Caco-2 (cell line): ENCODE measurements at regions of chr15 and their contacts with region 1.

Region 1: GRCh38 chr15:98779463-98780071 is 131.2 kb downstream of the IGF1R start:
- DNase-seq: peak; percentile 75 to 84
- H3K4me3 ChIP-seq: no peak overlapping the region
- H3K4me3 Mint-ChIP-seq: no peak overlapping the region
- H3K27ac Mint-ChIP-seq: peak overlapping the region; percentile 58
- H3K4me1 ChIP-seq: no peaks in the 10 kb centered on the region; the same call in none of the 2 replicates
- H3K4me1 Mint-ChIP-seq: peaks cover 16% of the 10 kb centered on the region
- H3K27me3 ChIP-seq: no peaks in the 10 kb centered on the region
- H3K27me3 Mint-ChIP-seq: no peaks in the 10 kb centered on the region
- CTCF ChIP-seq: peak; percentile 81 to 87

Region 2: DNA sequence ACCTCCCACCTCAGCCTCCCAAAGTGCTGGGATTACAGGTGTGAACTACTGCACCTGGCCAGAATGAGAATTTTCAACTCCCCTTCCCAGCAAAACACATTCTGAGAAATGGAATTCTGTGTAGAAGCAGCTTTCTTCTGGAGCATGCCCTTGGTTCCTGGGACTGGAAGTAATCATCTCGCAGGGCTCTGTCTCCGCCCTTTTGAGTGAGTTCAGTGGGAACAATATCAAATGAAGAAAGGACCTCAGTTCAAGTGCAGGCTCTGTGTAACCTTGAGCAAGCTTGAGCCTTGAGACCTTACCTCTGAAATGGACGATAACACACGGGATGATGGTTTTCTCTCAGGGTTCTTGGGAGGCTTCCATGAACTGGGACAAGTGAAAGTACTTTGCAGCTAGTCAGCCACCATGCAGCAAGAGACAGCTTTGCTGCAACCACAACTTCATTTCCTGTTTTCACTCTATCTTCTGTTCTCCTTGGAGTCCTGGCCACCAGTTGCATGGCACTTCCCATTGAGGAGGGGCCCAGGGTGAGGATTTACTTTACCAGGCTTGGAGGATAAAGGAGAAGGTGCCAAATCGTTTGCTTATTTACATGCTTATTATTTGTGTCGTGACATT is 167.0 kb before region 1 on chr15:
- CTCF ChIA-PET with region 1: no interaction called
- POLR2A ChIA-PET with region 1: no interaction called
- intact Hi-C with region 1: no loop called
- DNase-seq: no peak
- H3K4me3 ChIP-seq: no peak overlapping the region
- H3K4me3 Mint-ChIP-seq: no peak overlapping the region
- H3K27ac Mint-ChIP-seq: no peak overlapping the region
- H3K4me1 ChIP-seq: peaks cover 10% of the 10 kb centered on the region
- H3K4me1 Mint-ChIP-seq: peaks cover 6% of the 10 kb centered on the region
- H3K27me3 ChIP-seq: no peaks in the 10 kb centered on the region
- H3K27me3 Mint-ChIP-seq: no peaks in the 10 kb centered on the region
- CTCF ChIP-seq: no peak

Region 3: GRCh38 chr15:98626153-98626552 is 153.4 kb before region 1 on chr15:
- CTCF ChIA-PET with region 1: no interaction called
- POLR2A ChIA-PET with region 1: no interaction called
- intact Hi-C with region 1: no loop called
- DNase-seq: no peak
- H3K4me3 ChIP-seq: no peak overlapping the region
- H3K4me3 Mint-ChIP-seq: no peak overlapping the region
- H3K27ac Mint-ChIP-seq: no peak overlapping the region
- H3K4me1 ChIP-seq: peaks cover 6% of the 10 kb centered on the region; the same call in 1 of the 2 replicates
- H3K4me1 Mint-ChIP-seq: no peaks in the 10 kb centered on the region
- H3K27me3 ChIP-seq: no peaks in the 10 kb centered on the region
- H3K27me3 Mint-ChIP-seq: peaks cover 29% of the 10 kb centered on the region
- CTCF ChIP-seq: no peak

Region 4: DNA sequence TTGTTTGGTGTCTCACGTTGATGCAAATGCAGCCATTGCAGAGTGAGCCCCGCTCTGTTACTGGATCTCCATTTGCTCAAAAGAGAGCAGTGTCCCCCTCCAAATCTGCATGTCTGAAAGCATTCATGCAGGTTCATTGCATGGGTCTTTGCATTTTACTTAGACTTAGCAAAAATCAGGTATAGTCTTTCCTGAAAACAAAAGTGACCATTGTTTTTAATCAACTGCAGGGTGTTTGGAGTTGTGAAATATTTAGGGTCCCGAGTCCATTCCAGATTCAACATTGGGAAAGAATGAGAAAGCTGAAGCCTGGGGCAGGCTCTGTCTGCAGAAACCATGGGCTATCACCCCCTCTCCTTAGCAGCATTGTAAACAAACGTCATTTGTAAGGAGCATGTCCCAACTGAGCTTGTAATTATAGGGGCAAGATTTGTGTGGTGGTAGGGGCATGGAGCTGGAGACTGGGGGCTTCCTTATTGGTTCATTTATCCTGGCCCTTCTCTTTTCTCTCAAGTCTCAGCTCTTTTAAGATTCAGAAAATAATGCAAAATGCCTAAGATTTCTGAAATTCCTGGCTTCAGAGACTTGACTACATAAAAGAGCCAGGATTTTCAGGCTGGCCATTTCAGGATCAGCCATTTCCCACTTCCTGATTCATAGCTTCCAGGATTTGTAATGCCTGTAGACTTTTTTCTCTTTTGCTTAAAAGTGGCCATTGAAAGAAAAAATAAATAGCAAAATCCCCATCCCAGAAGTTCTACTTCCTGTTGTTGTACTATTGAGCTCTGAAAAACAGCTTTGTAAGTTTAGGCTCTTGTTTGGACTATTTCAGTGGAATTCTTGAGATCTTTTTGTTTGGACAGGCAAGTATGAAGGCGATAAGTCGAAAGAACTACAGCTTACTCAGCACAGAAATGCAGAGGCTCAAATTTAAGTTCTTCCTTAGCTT is 108.2 kb before region 1 on chr15:
- CTCF ChIA-PET with region 1: no interaction called
- POLR2A ChIA-PET with region 1: no interaction called
- intact Hi-C with region 1: loop called (anchors 5 kb)
- DNase-seq: peak in 1 of 2 experiments; percentile 60
- H3K4me3 ChIP-seq: no peak overlapping the region
- H3K4me3 Mint-ChIP-seq: peak overlapping the region; percentile 56
- H3K27ac Mint-ChIP-seq: peak overlapping the region; percentile 82
- H3K4me1 ChIP-seq: peaks cover 68% of the 10 kb centered on the region
- H3K4me1 Mint-ChIP-seq: peaks cover 42% of the 10 kb centered on the region
- H3K27me3 ChIP-seq: no peaks in the 10 kb centered on the region
- H3K27me3 Mint-ChIP-seq: no peaks in the 10 kb centered on the region
- CTCF ChIP-seq: no peak

Region 5: DNA sequence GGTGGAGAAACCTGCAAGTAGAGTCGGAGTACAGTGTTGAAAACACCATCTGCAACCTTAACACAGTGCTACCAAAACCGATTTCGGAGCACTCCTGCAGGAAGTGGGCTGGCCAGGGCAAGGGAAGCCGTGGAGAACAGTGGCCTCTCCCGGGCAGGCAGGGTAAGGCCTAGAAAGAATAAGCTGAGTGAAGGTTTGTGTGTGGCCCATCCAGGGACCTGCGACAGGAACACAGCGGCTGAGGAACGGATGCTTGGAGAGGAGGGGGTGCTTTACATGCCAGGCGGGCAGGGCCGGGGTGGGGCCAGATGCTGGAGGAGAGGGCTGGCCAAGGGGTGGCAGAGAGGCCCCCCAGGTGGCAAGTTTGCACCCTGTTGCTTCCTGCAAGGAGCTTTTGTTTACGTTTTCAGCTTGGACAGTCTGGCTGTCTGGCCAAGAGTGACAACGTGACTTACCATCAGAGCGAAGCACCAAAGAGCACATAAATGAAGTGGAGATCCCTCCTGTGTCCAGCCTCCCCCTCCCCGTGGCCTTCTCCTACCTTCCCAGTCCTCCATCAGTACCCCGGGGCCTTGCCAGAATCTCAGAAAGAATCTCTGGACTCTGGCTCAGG is 71.5 kb after region 1 on chr15:
- CTCF ChIA-PET with region 1: interaction called, 12 read pairs
- POLR2A ChIA-PET with region 1: no interaction called
- intact Hi-C with region 1: no loop called
- DNase-seq: peak; percentile 70 to 73
- H3K4me3 ChIP-seq: no peak overlapping the region
- H3K4me3 Mint-ChIP-seq: peak overlapping the region; percentile 79
- H3K27ac Mint-ChIP-seq: peak overlapping the region; percentile 22
- H3K4me1 ChIP-seq: peaks cover 10% of the 10 kb centered on the region
- H3K4me1 Mint-ChIP-seq: peaks cover 35% of the 10 kb centered on the region
- H3K27me3 ChIP-seq: no peaks in the 10 kb centered on the region
- H3K27me3 Mint-ChIP-seq: no peaks in the 10 kb centered on the region
- CTCF ChIP-seq: peak; percentile 53 to 74

Region 6: DNA sequence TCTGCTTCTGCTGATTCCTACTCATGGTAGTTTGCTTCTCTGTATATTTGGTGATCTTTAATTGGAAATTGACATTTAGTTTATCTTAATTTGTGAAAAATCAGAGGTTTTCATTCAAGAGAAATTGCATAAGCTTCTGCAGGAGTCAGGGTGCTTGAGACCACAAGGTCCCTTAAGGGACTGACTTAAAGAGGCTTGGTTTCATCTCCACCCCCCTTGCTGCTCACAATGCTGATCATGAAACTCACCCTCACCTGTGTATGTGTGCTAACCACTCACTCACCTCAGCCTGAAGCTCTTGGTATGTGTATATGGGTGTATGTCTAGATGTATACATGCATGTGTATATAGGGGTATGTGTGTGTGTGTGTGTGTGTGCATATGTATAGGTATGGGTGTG is 216.6 kb after region 1 on chr15:
- CTCF ChIA-PET with region 1: no interaction called
- POLR2A ChIA-PET with region 1: no interaction called
- intact Hi-C with region 1: no loop called
- DNase-seq: no peak
- H3K4me3 ChIP-seq: no peak overlapping the region
- H3K4me3 Mint-ChIP-seq: no peak overlapping the region
- H3K27ac Mint-ChIP-seq: no peak overlapping the region
- H3K4me1 ChIP-seq: no peaks in the 10 kb centered on the region
- H3K4me1 Mint-ChIP-seq: no peaks in the 10 kb centered on the region
- H3K27me3 ChIP-seq: no peaks in the 10 kb centered on the region
- H3K27me3 Mint-ChIP-seq: no peaks in the 10 kb centered on the region
- CTCF ChIP-seq: no peak